ENCODE measurements at regions of chr22 and their contacts with region 1.

Region 1: GRCh38 chr22:21098099-21098671 is 52.4 kb downstream of the LRRC74B start:
- DNase-seq: no peak
- ATAC-seq: no peak
- H3K4me3 ChIP-seq: no peak overlapping the region
- H3K27ac ChIP-seq: no peak overlapping the region
- H3K4me1 ChIP-seq: peaks cover 0 to 6% (median 0%) of the 10 kb centered on the region in 12 donors
- H3K27me3 ChIP-seq: peaks cover 0 to 15% (median 2%) of the 10 kb centered on the region in 9 donors
- CTCF ChIP-seq: no peak
- POLR2A ChIP-seq: no peak

Region 2: DNA sequence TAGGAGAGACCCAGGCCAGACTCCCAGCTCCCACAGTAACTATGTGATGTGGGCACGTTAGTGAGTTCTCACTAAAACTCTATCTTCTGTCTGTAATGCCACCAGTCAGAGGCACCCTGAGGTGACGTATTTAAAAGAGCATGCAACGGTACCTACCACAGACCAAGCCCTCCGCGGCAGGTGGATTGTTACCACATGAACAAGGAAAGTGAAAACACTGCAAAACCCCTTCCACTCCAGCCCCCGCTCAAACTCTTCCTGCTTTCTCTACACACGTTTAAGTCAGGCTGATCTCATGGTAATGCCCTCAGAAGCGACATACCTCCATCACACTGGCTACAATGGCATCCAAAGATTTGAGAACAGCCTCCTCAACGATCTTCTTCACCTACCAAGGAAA is 287.5 kb before region 1 on chr22:
- intact Hi-C with region 1: no loop called
- DNase-seq: no peak
- ATAC-seq: no peak
- H3K4me3 ChIP-seq: no peak overlapping the region
- H3K27ac ChIP-seq: no peak overlapping the region
- H3K4me1 ChIP-seq: no peaks in the 10 kb centered on the region
- H3K27me3 ChIP-seq: no peaks in the 10 kb centered on the region
- CTCF ChIP-seq: no peak
- POLR2A ChIP-seq: no peak

Region 3: GRCh38 chr22:20829491-20830134 is 268.6 kb before region 1 on chr22:
- intact Hi-C with region 1: no loop called
- DNase-seq: no peak
- ATAC-seq: no peak
- H3K4me3 ChIP-seq: no peak overlapping the region
- H3K27ac ChIP-seq: no peak overlapping the region
- H3K4me1 ChIP-seq: no peaks in the 10 kb centered on the region
- H3K27me3 ChIP-seq: no peaks in the 10 kb centered on the region
- CTCF ChIP-seq: no peak
- POLR2A ChIP-seq: no peak

Region 4: GRCh38 chr22:21031971-21032867 is 66.0 kb before region 1 on chr22 and contains the start of gene SLC7A4:
- intact Hi-C with region 1: loop called in 1 of 10 experiments (anchors 10 kb)
- DNase-seq: peak in 1 of 5 donors; percentile 61
- ATAC-seq: peak in 2 of 4 donors; percentile 13 to 56
- H3K4me3 ChIP-seq: peak within 1 kb of the TSS in 11 of 12 donors; percentile 1 to 51 (median 41)
- H3K27ac ChIP-seq: no peak within 1 kb of the TSS
- H3K4me1 ChIP-seq: peaks cover 0 to 17% (median 6%) of the 10 kb centered on the region in 12 donors
- H3K27me3 ChIP-seq: peaks cover 9 to 52% (median 22%) of the 10 kb centered on the region in 9 donors
- CTCF ChIP-seq: no peak
- POLR2A ChIP-seq: no peak
- total RNA-seq, gene SLC7A4: 0.24 to 2.8 (median 0.31) TPM in 3 of 9 donors, not detected in the others

Region 5: DNA sequence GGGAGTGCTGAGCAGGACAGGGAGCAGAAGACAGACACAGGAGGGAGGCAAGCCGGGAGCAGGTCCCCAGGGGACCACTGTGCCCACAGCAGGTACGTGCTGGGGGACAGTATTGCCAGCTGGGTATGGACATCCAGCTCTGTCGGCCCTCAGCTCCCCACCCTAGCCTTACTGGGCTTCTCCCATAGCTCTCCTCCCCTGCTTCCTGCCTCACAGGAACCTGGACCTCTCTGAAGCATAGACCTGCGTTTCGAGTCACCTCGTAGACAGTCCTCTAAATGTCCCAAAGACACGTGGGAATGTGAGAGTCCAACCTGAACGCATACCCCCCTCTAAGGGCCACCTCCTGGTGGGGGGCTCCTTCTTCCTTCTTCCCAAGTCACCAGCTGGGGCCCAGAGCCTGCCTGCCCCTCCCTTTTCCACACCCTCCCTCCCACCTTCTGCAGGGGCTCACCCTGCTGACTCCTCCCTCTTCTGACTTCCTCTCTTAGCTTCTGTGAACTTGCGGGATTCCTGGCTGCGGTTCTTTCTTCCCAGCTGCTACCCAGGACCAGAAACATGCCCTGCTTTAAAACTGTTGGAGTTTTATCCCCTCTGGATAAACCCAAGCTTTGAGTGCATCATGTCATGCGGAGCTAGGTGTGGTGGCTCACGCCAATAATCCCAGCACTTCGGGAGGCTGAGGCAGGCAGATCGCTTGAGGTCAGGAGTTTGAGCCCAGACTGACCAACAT is 42.4 kb before region 1 on chr22:
- intact Hi-C with region 1: no loop called
- DNase-seq: peak in 1 of 5 donors; percentile 11
- ATAC-seq: no peak
- H3K4me3 ChIP-seq: no peak overlapping the region
- H3K27ac ChIP-seq: no peak overlapping the region
- H3K4me1 ChIP-seq: peaks cover 0 to 6% (median 0%) of the 10 kb centered on the region in 12 donors
- H3K27me3 ChIP-seq: peaks cover 0 to 5% (median 0%) of the 10 kb centered on the region in 9 donors
- CTCF ChIP-seq: no peak
- POLR2A ChIP-seq: no peak